ENCODE measurements at regions of chr18 and their contacts with region 1.

Region 1: DNA sequence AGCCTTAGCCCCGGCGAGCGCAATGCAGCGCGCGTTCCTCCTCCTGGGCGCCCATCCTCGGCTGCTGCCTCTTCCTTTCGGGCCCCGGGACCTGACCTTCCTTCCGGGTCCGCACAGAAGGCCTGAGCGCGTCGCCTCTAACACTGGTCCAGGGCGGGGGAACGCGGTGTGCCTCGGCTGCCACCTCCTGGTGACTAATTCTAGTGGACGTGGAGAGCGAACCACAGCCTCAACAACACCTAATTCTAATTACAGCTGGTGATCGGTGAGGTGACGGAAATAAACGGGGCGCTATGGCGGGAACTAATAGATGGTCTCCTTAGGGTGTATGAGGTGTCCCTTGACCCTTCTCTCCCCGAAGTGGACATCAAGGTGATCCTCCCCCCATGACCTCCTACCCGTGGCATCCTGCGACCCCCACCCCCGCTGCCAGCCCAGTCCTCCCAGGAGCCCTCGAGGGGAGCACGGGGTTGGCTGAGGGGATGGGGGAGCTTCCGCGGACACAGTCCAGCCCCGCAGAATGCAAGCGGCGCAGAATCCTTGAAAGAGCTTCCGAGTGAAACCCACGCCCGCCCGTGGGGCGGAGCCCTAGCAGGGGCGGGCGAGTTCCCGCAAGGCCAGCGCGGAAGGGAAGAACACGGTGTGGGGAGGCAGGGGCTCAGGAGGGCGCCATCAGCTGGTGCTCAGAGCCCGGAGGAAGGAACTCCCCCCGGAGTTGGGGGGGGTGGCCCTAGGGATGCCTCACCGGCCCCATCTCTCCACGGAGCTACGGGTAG is 12.8 kb upstream of the HMSD start:
- DNase-seq: peak; percentile 85
- H3K4me3 ChIP-seq: peak overlapping the region; percentile 53 to 62
- H3K27ac ChIP-seq: no peak overlapping the region
- H3K4me1 ChIP-seq: peaks cover 0 to 9% of the 10 kb centered on the region in 2 experiments; a peak in 2 of 4 replicates
- H3K27me3 ChIP-seq: peaks cover 19% of the 10 kb centered on the region; the same call in 1 of the 2 replicates
- CTCF ChIP-seq: peak; percentile 63
- EP300 ChIP-seq: no peak
- RAD21 ChIP-seq: peak; percentile 67

Region 2: GRCh38 chr18:63511286-63511685 is 425.1 kb before region 1 on chr18:
- CTCF ChIA-PET with region 1: interaction called, 13 read pairs
- POLR2A ChIA-PET with region 1: no interaction called
- DNase-seq: peak; percentile 23
- H3K4me3 ChIP-seq: no peak overlapping the region; a peak in 1 of 4 replicates
- H3K27ac ChIP-seq: no peak overlapping the region
- H3K4me1 ChIP-seq: peaks cover 3% of the 10 kb centered on the region in 2 experiments; a peak in 1 of 4 replicates
- H3K27me3 ChIP-seq: peaks cover 31% of the 10 kb centered on the region; the same call in 1 of the 2 replicates
- CTCF ChIP-seq: peak; percentile 67
- EP300 ChIP-seq: no peak
- RAD21 ChIP-seq: peak; percentile 34; the same call in 1 of the 2 replicates

Region 3: DNA sequence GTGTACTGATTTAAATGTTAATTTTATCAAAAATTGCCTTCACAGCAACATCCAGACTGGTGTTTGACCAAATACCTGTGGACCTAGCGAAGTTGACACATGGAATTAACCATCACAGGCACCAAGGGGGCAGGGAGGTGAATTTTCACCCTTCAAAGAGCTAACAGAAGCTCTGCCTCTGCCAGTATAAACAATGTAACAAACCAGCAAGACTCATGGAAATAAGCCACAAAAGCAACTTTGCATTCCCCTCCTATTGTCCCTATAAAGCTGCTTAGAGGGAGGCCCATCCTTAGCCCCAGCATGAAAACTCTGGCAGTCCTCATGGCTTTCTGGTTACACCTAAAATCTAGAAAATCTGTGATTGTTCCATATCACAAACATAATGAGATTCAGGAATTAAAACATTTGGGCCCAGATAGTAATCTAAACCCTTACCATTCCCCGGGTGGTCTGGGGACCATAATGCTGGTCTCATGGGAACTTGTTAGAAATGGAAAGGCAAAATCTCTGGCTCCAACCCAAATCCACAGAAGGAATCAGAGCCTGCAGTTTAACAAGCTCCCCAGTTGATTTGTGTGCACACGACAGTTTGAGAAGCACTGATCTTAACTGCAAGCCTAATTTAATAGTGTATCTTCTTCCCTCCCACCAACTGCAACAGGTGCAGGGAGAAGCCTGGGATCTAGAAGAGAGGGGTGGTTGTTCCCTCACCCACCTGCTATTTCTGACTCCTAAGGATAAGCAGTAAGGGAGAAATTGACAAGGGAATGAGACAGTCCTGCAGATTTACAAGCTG is 210.5 kb before region 1 on chr18:
- CTCF ChIA-PET with region 1: no interaction called
- POLR2A ChIA-PET with region 1: no interaction called
- DNase-seq: no peak
- H3K4me3 ChIP-seq: no peak overlapping the region
- H3K27ac ChIP-seq: no peak overlapping the region
- H3K4me1 ChIP-seq: no peaks in the 10 kb centered on the region
- H3K27me3 ChIP-seq: no peaks in the 10 kb centered on the region; the same call in 1 of the 2 replicates
- CTCF ChIP-seq: no peak
- EP300 ChIP-seq: no peak
- RAD21 ChIP-seq: no peak

Region 4: DNA sequence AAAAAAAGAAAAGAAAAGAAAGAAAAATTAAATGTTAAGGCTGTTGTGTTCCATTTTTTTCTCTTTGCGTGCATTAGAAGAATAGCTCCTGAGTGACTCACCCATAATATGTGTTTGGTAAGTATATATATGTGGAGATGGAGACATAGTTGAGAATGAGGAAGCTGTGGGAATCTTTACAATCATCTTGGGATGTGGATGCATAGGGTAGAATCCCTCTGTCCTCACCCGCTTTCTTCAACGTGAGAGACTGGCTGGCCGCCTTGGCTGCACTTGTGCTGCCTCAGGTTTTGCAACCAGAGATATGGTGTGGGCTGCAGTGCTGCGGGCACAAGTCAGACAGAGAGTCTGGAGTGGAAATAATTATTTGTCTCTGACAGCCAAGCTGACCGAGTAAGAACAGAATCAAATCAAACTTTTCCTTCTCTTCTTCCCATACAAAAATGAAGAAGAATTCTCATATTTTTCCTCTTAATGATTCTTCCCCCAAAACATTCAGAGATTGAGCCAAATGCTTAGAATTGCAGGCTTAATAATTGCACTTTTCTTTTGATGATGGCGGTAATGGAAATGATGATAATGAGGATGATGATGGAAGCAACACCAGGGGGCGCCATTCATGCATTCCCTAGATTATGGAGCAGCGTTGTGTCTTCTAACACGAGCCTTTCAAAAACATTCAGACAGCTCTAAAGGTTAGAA is 112.7 kb before region 1 on chr18:
- CTCF ChIA-PET with region 1: interaction called, 11 read pairs
- POLR2A ChIA-PET with region 1: no interaction called
- DNase-seq: peak; percentile 14
- H3K4me3 ChIP-seq: no peak overlapping the region; a peak in 1 of 4 replicates
- H3K27ac ChIP-seq: peak overlapping the region in 1 of 2 experiments; percentile 45; a peak in 1 of 4 replicates
- H3K4me1 ChIP-seq: peaks cover 4 to 6% of the 10 kb centered on the region in 2 experiments; a peak in 3 of 4 replicates
- H3K27me3 ChIP-seq: no peaks in the 10 kb centered on the region
- CTCF ChIP-seq: peak; percentile 70
- EP300 ChIP-seq: no peak
- RAD21 ChIP-seq: peak; percentile 53

Region 5: DNA sequence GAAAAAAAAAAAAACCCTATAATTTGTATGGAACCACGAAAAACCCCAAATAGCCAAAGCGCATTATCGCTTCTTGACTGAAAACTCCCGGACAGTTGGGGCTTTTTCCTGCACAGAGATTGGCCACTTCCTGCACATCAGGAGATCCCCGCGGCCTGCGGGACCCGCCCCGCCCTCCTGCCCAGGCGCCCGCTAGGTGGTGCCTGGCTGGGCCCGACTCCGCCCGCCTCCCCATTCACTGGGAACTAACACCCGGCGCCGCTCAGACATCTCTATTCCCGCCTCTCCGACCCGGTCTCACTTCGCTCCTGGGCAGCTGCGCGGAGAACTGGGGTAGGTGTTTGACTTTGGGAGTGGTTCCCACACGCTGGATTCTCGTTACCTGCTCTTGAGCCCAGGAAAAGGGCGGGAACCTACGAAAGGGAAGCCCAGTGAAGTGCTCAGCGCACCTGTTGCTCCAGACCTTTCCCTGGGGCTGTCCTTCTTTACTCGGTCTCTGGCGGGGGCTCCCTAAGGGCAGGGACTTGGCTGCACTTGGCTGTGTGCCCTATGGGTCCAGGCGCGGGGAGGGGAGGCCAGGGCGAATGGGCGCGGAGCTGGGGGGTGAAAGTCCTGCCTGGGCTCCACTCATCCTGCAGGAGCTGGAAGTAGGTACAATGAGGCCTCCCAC is 12.9 kb after region 1 on chr18 and contains the start of gene HMSD:
- CTCF ChIA-PET with region 1: interaction called, 14 read pairs
- POLR2A ChIA-PET with region 1: no interaction called
- DNase-seq: peak; percentile 56
- H3K4me3 ChIP-seq: no peak within 1 kb of the TSS
- H3K27ac ChIP-seq: no peak within 1 kb of the TSS
- H3K4me1 ChIP-seq: no peaks in the 10 kb centered on the region; a peak in 1 of 4 replicates
- H3K27me3 ChIP-seq: peaks cover 2% of the 10 kb centered on the region; the same call in 1 of the 2 replicates
- CTCF ChIP-seq: peak; percentile 17; the same call in 1 of the 2 replicates
- EP300 ChIP-seq: no peak
- RAD21 ChIP-seq: no peak
- polyA plus RNA-seq, gene HMSD: not detected in 2 replicates

Region 6: GRCh38 chr18:63994783-63995399 is 58.5 kb after region 1 on chr18:
- CTCF ChIA-PET with region 1: interaction called, 14 read pairs
- POLR2A ChIA-PET with region 1: no interaction called
- DNase-seq: peak; percentile 72
- H3K4me3 ChIP-seq: no peak overlapping the region
- H3K27ac ChIP-seq: no peak overlapping the region
- H3K4me1 ChIP-seq: peaks cover 0 to 3% of the 10 kb centered on the region in 2 experiments; a peak in 1 of 4 replicates
- H3K27me3 ChIP-seq: no peaks in the 10 kb centered on the region
- CTCF ChIP-seq: peak; percentile 84
- EP300 ChIP-seq: no peak
- RAD21 ChIP-seq: peak; percentile 70

Region 7: GRCh38 chr18:64207820-64208219 is 271.5 kb after region 1 on chr18:
- CTCF ChIA-PET with region 1: no interaction called
- POLR2A ChIA-PET with region 1: no interaction called
- DNase-seq: no peak
- H3K4me3 ChIP-seq: no peak overlapping the region
- H3K27ac ChIP-seq: no peak overlapping the region
- H3K4me1 ChIP-seq: no peaks in the 10 kb centered on the region
- H3K27me3 ChIP-seq: no peaks in the 10 kb centered on the region
- CTCF ChIP-seq: no peak
- EP300 ChIP-seq: no peak
- RAD21 ChIP-seq: no peak

Region 8: DNA sequence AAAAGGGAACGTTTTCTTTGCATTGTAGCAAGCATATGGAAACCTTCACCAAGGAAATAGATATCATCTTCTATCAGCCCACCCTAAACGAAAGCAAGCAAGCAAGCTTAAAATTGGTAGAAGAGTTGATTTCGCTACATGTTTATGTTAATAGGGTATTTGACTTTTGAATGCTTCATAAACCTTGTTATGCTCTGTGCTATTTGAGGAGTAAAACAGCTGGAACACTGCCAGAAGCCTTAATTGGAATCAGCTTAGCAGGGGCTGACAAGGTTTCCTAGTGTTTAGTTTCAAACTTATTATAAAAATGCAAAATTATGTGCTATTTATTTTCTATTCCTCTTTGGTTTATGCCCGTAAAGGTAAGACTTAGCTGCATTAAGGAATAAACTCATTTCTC is 283.2 kb after region 1 on chr18:
- CTCF ChIA-PET with region 1: no interaction called
- POLR2A ChIA-PET with region 1: no interaction called
- DNase-seq: no peak
- H3K4me3 ChIP-seq: no peak overlapping the region
- H3K27ac ChIP-seq: no peak overlapping the region
- H3K4me1 ChIP-seq: no peaks in the 10 kb centered on the region
- H3K27me3 ChIP-seq: no peaks in the 10 kb centered on the region
- CTCF ChIP-seq: no peak
- EP300 ChIP-seq: no peak
- RAD21 ChIP-seq: no peak